GM12878 (cell line): ENCODE measurements at regions of chr5 and their contacts with region 1.

Region 1: DNA sequence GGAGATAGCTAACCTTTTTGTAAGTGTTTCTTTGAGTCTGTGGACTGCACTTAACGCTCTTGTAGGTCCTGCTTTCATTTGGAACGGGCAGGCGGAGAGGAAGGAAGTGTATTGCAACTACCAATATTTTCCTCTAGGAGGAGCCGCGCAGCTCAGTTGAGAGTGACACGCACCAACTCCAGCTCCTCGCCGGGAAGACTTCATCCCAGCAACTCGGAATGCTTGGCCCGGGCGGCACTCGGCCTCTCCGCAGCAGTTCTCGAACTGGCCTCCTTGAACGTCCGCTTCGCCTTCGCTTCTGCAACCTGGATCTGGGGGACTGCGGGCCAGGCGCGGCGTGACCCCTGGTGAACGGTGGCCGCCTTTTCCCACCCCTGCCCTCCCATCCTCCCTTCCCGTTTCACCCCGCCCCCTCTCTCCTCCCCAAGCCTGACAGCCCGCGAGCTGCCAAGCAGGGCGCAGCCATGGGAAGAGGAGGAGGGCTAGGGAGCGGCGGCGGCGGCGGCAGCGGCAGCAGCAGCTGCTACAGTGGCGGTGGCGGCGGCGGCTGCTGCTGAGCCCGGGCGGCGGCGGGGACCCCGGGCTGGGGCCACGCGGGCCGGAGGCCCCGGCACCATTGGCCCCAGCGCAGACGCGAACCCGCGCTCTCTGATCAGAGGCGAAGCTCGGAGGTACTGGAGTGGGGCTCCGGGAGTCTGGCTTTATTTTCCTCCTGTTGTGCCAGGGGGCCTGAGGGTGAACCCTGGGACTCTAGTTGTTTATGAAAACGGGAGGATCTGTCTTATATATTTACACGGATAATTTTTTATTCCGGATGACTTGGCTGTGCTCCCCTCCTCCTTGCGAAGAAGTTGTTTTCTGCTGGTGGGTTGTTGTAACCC is at the start of gene GHR:
- DNase-seq: no peak
- ATAC-seq: peak; percentile 72
- H3K4me3 ChIP-seq: no peak within 1 kb of the TSS
- H3K27ac ChIP-seq: no peak within 1 kb of the TSS
- H3K4me1 ChIP-seq: no peaks in the 10 kb centered on the region
- H3K27me3 ChIP-seq: peaks cover 0 to 3% of the 10 kb centered on the region in 2 experiments; a peak in 2 of 4 replicates
- CTCF ChIP-seq: peak; percentile 30 to 46 (median 30); a peak in 4 of 6 replicates
- EP300 ChIP-seq: no peak
- POLR2A ChIP-seq: no peak
- RAD21 ChIP-seq: peak; percentile 39; the same call in 1 of the 2 replicates
- polyA plus RNA-seq, gene GHR: 0.23 to 0.26 TPM

Region 2: GRCh38 chr5:42454216-42454995 is 30.9 kb after region 1 on chr5:
- CTCF ChIA-PET with region 1: interaction called, 13 read pairs
- POLR2A ChIA-PET with region 1: interaction called, 3 read pairs
- RAD21 ChIA-PET with region 1: interaction called, 30 read pairs
- SMC1A ChIA-PET with region 1: interaction called, 15 read pairs
- in situ Hi-C with region 1: no loop called
- intact Hi-C with region 1: no loop called
- DNase-seq: no peak
- ATAC-seq: peak; percentile 42; the same call in 2 of the 3 replicates
- H3K4me3 ChIP-seq: no peak overlapping the region
- H3K27ac ChIP-seq: no peak overlapping the region
- H3K4me1 ChIP-seq: no peaks in the 10 kb centered on the region
- H3K27me3 ChIP-seq: no peaks in the 10 kb centered on the region
- CTCF ChIP-seq: no peak
- EP300 ChIP-seq: no peak
- POLR2A ChIP-seq: no peak
- RAD21 ChIP-seq: no peak

Region 3: DNA sequence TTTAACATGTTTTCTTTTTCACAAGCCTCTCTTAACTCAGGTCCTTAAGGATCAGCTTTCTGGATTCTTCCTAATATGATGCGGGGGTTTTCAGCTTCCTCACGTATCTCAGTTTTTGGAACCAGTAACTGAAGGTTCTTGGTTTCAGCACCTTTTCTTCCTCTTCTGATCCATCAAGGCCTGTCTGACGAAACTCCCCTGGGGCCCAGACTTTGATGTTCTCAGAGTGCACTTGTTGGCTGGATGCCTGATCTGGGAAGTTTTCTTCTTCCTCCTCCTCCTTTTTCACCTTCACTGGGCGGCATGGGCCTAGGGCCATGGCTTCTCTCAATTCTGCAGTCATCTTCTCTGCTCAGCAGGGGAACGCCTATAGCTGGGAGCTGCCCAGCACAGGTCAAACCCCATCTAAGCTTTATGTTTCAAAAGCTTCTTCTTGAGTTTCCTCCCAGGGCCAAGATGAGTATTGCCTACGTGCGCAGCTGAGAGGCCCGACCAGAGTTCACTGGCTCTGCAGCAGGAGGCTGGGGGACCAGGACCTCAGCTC is 44.5 kb after region 1 on chr5:
- CTCF ChIA-PET with region 1: interaction called, 22 read pairs
- POLR2A ChIA-PET with region 1: interaction called, 18 read pairs
- RAD21 ChIA-PET with region 1: interaction called, 79 read pairs
- SMC1A ChIA-PET with region 1: interaction called, 35 read pairs
- in situ Hi-C with region 1: no loop called
- intact Hi-C with region 1: no loop called
- DNase-seq: no peak
- ATAC-seq: peak; percentile 51
- H3K4me3 ChIP-seq: no peak overlapping the region
- H3K27ac ChIP-seq: no peak overlapping the region
- H3K4me1 ChIP-seq: no peaks in the 10 kb centered on the region
- H3K27me3 ChIP-seq: no peaks in the 10 kb centered on the region
- CTCF ChIP-seq: no peak
- EP300 ChIP-seq: no peak
- POLR2A ChIP-seq: no peak
- RAD21 ChIP-seq: no peak

Region 4: DNA sequence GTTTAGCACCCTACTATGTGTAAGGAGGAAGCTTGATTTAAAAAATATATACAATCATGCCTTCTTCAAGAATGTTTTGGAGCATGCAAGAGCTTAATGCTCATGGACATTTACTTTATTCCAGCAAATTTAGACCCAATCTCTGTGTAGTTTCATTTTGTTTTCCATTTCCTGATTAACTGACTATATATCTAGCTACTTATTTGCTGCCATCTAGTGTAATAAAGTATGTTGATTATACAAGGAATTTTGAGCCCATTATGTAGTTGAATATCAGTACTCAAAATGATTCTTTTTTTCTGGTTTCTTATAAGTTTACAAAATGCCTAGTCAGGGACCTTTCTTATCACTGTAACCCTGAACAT is 233.1 kb after region 1 on chr5:
- CTCF ChIA-PET with region 1: interaction called, 4 read pairs
- POLR2A ChIA-PET with region 1: no interaction called
- RAD21 ChIA-PET with region 1: interaction called, 16 read pairs
- SMC1A ChIA-PET with region 1: interaction called, 10 read pairs
- in situ Hi-C with region 1: no loop called
- intact Hi-C with region 1: no loop called
- DNase-seq: no peak
- ATAC-seq: no peak
- H3K4me3 ChIP-seq: no peak overlapping the region
- H3K27ac ChIP-seq: no peak overlapping the region
- H3K4me1 ChIP-seq: no peaks in the 10 kb centered on the region
- H3K27me3 ChIP-seq: no peaks in the 10 kb centered on the region
- CTCF ChIP-seq: no peak
- EP300 ChIP-seq: no peak
- POLR2A ChIP-seq: no peak
- RAD21 ChIP-seq: no peak

Region 5: GRCh38 chr5:42889311-42889933 is 465.9 kb after region 1 on chr5:
- CTCF ChIA-PET with region 1: interaction called, 12 read pairs
- POLR2A ChIA-PET with region 1: no interaction called
- RAD21 ChIA-PET with region 1: interaction called, 7 read pairs
- SMC1A ChIA-PET with region 1: interaction called, 5 read pairs
- in situ Hi-C with region 1: no loop called
- intact Hi-C with region 1: no loop called
- DNase-seq: no peak
- ATAC-seq: peak; percentile 97; the same call in 2 of the 3 replicates
- H3K4me3 ChIP-seq: no peak overlapping the region
- H3K27ac ChIP-seq: no peak overlapping the region
- H3K4me1 ChIP-seq: no peaks in the 10 kb centered on the region
- H3K27me3 ChIP-seq: peaks cover 0 to 2% of the 10 kb centered on the region in 2 experiments; a peak in 2 of 4 replicates
- CTCF ChIP-seq: peak; percentile 85 to 92 (median 90)
- EP300 ChIP-seq: no peak
- POLR2A ChIP-seq: no peak
- RAD21 ChIP-seq: peak; percentile 96

Region 6: GRCh38 chr5:43191740-43192557 is 768.4 kb after region 1 on chr5 and contains the start of gene NIM1K:
- CTCF ChIA-PET with region 1: no interaction called
- POLR2A ChIA-PET with region 1: no interaction called
- RAD21 ChIA-PET with region 1: no interaction called
- SMC1A ChIA-PET with region 1: no interaction called
- in situ Hi-C with region 1: no loop called
- intact Hi-C with region 1: no loop called
- DNase-seq: no peak
- ATAC-seq: peak; percentile 87
- H3K4me3 ChIP-seq: peak within 1 kb of the TSS; percentile 90
- H3K27ac ChIP-seq: no peak within 1 kb of the TSS; the same call in 1 of the 2 replicates
- H3K4me1 ChIP-seq: peaks cover 12% of the 10 kb centered on the region
- H3K27me3 ChIP-seq: no peaks in the 10 kb centered on the region
- CTCF ChIP-seq: no peak
- EP300 ChIP-seq: no peak
- POLR2A ChIP-seq: no peak
- RAD21 ChIP-seq: no peak
- polyA plus RNA-seq, gene NIM1K: 0.27 to 0.35 TPM